Heart right ventricle (tissue), 16 donors: ENCODE measurements at regions of chr3 and their contacts with region 1.

Region 1: GRCh38 chr3:16240283-16241023 is 24.3 kb downstream of the DPH3 start:
- DNase-seq: no peak
- ATAC-seq: no peak
- H3K4me3 ChIP-seq: no peak overlapping the region
- H3K27ac ChIP-seq: peak overlapping the region in 1 of 10 donors; percentile 49
- H3K4me1 ChIP-seq: peaks cover 0 to 53% (median 35%) of the 10 kb centered on the region in 9 donors
- H3K27me3 ChIP-seq: no peaks in the 10 kb centered on the region
- CTCF ChIP-seq: no peak

Region 2: DNA sequence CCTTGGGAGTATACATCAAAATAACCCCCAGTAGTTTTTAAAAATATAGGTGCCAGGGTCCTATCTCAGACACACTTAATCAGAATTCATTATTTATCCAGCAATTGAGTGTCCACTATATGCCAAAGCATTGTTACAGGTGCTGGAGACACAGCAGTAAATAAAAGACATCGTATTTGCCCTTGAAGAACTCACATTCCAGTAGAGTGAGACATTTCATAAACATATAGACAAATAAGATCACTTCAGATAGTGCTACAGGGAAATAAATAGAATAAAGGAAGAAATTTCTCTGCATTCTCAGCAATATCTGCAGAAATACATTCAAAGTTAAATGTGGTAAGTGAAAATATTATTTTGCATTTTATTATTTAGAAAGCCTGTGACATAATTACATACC is 408.5 kb before region 1 on chr3:
- intact Hi-C with region 1: loop called in 1 of 10 experiments (anchors 5 kb)
- DNase-seq: no peak
- ATAC-seq: no peak
- H3K4me3 ChIP-seq: no peak overlapping the region
- H3K27ac ChIP-seq: no peak overlapping the region
- H3K4me1 ChIP-seq: no peaks in the 10 kb centered on the region
- H3K27me3 ChIP-seq: no peaks in the 10 kb centered on the region
- CTCF ChIP-seq: no peak